H1 (cell line): ENCODE measurements at regions of chr1 and their contacts with region 1.

Region 1: GRCh38 chr1:165392634-165393571 is 36.4 kb upstream of the LMX1A start:
- DNase-seq: peak in 1 of 2 experiments; percentile 88
- H3K4me3 ChIP-seq: peak overlapping the region in 3 of 4 experiments; percentile 17 to 50 (median 34); a peak in 6 of 8 replicates
- H3K27ac ChIP-seq: no peak overlapping the region
- H3K4me1 ChIP-seq: no peaks in the 10 kb centered on the region; a peak in 1 of 7 replicates
- H3K27me3 ChIP-seq: no peaks in the 10 kb centered on the region; a peak in 1 of 7 replicates
- CTCF ChIP-seq: peak; percentile 85 to 92 (median 88)
- EP300 ChIP-seq: peak in 1 of 2 experiments; percentile 14; a peak in 1 of 3 replicates
- POLR2A ChIP-seq: no peak
- RAD21 ChIP-seq: peak; percentile 92 to 94

Region 2: GRCh38 chr1:165265196-165265838 is 127.6 kb before region 1 on chr1:
- CTCF ChIA-PET with region 1: no interaction called
- POLR2A ChIA-PET with region 1: no interaction called
- DNase-seq: no peak
- H3K4me3 ChIP-seq: no peak overlapping the region
- H3K27ac ChIP-seq: no peak overlapping the region
- H3K4me1 ChIP-seq: peaks cover 0 to 3% (median 0%) of the 10 kb centered on the region in 4 experiments; a peak in 1 of 7 replicates
- H3K27me3 ChIP-seq: no peaks in the 10 kb centered on the region; a peak in 3 of 7 replicates
- CTCF ChIP-seq: no peak
- EP300 ChIP-seq: no peak
- POLR2A ChIP-seq: no peak
- RAD21 ChIP-seq: no peak

Region 3: DNA sequence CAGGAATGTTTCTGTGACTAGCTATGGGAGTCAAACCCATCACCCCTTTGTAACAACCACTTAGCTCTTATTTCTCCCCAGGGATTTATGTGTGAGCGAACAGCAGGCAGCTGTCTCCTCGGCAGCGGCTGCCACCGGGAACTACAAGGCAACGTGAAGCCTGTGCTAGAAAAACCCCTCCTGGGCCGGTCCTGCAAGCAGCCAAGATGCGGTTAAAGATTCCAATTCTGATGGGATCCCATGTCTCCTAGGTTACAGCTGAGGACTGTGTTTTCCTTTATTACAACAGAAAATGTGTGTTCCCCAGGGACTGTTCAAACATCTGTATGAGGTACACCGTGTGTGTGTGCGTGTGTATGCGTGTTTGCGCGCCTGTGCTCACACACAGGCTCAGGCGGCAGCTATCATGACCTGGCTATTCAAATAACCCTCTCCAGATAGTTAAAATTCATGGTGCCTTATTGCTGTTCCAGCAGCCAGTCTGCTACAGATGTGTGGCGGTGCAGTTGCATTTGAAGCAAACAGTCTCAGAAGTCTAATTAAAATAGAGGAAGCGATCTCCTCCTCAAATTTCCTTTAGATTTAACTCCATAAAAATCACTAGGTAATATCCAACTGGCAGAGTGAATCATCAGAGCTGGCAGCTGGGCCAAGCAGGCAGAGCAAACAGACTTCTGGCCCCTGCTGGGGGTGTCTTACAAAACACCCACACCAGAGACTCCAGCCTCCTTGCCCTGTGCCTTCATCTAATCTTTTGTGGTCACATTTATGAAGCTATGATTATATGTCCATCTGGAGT is 104.4 kb before region 1 on chr1:
- CTCF ChIA-PET with region 1: no interaction called
- POLR2A ChIA-PET with region 1: no interaction called
- DNase-seq: no peak
- H3K4me3 ChIP-seq: no peak overlapping the region
- H3K27ac ChIP-seq: no peak overlapping the region
- H3K4me1 ChIP-seq: peaks cover 0 to 3% (median 2%) of the 10 kb centered on the region in 4 experiments; a peak in 4 of 7 replicates
- H3K27me3 ChIP-seq: no peaks in the 10 kb centered on the region; a peak in 1 of 7 replicates
- CTCF ChIP-seq: no peak
- EP300 ChIP-seq: no peak
- POLR2A ChIP-seq: no peak
- RAD21 ChIP-seq: no peak

Region 4: GRCh38 chr1:165403835-165404482 is 11.1 kb after region 1 on chr1:
- CTCF ChIA-PET with region 1: interaction called, 30 read pairs
- POLR2A ChIA-PET with region 1: no interaction called
- DNase-seq: peak in 1 of 2 experiments; percentile 69
- H3K4me3 ChIP-seq: no peak overlapping the region
- H3K27ac ChIP-seq: no peak overlapping the region
- H3K4me1 ChIP-seq: no peaks in the 10 kb centered on the region
- H3K27me3 ChIP-seq: no peaks in the 10 kb centered on the region; a peak in 1 of 7 replicates
- CTCF ChIP-seq: peak; percentile 61 to 95 (median 89)
- EP300 ChIP-seq: no peak
- POLR2A ChIP-seq: no peak
- RAD21 ChIP-seq: peak; percentile 95 to 98

Region 5: GRCh38 chr1:165586435-165586834 is 193.5 kb after region 1 on chr1:
- CTCF ChIA-PET with region 1: interaction called, 220 read pairs
- POLR2A ChIA-PET with region 1: no interaction called
- DNase-seq: no peak
- H3K4me3 ChIP-seq: no peak overlapping the region
- H3K27ac ChIP-seq: no peak overlapping the region
- H3K4me1 ChIP-seq: no peaks in the 10 kb centered on the region
- H3K27me3 ChIP-seq: no peaks in the 10 kb centered on the region
- CTCF ChIP-seq: no peak
- EP300 ChIP-seq: no peak
- POLR2A ChIP-seq: no peak
- RAD21 ChIP-seq: no peak